ENCODE measurements at regions of chr18 and their contacts with region 1.

Region 1: GRCh38 chr18:21118806-21119205 is 7.2 kb upstream of the ROCK1 start:
- DNase-seq: no peak
- H3K4me3 Mint-ChIP-seq: no peak overlapping the region
- H3K27ac Mint-ChIP-seq: no peak overlapping the region
- H3K4me1 Mint-ChIP-seq: peaks cover 13% of the 10 kb centered on the region
- H3K27me3 Mint-ChIP-seq: no peaks in the 10 kb centered on the region

Region 2: GRCh38 chr18:21074336-21075323 is 44.2 kb before region 1 on chr18:
- CTCF ChIA-PET with region 1: no interaction called
- POLR2A ChIA-PET with region 1: no interaction called
- intact Hi-C with region 1: loop called (anchors 1 kb)
- DNase-seq: no peak
- H3K4me3 Mint-ChIP-seq: no peak overlapping the region
- H3K27ac Mint-ChIP-seq: no peak overlapping the region
- H3K4me1 Mint-ChIP-seq: peaks cover 67% of the 10 kb centered on the region
- H3K27me3 Mint-ChIP-seq: no peaks in the 10 kb centered on the region

Region 3: DNA sequence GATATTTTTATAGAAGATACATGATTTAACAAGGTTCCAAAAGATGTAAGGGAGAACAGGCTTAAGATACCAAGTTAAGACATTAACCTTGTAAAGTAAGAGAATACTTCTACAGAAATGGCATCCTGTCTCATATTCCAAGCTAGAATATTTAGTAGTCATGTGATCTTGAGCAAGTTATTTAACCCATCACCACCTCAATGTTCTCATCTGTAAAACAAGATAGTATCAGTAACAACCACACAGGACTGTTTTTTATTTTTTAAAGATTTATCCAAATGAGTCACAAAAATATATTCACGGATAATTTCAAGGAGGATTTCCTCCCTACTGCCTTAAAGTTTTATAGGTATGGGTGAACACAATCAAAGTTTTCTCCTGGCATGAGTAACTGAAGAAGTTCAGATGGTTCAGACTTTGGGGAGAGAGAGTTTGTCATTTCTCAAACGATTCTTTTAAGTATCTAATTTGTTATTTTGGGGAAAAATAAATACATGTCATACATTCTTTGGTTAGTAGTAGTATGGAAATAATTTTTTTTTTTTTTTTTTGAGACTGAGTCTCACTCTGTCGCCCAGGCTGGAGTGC is 33.1 kb before region 1 on chr18:
- CTCF ChIA-PET with region 1: no interaction called
- POLR2A ChIA-PET with region 1: no interaction called
- intact Hi-C with region 1: no loop called
- DNase-seq: no peak
- H3K4me3 Mint-ChIP-seq: no peak overlapping the region
- H3K27ac Mint-ChIP-seq: no peak overlapping the region
- H3K4me1 Mint-ChIP-seq: peaks cover 70% of the 10 kb centered on the region
- H3K27me3 Mint-ChIP-seq: no peaks in the 10 kb centered on the region